GM12878 (cell line): ENCODE measurements at regions of chr3 and their contacts with region 1.

Region 1: DNA sequence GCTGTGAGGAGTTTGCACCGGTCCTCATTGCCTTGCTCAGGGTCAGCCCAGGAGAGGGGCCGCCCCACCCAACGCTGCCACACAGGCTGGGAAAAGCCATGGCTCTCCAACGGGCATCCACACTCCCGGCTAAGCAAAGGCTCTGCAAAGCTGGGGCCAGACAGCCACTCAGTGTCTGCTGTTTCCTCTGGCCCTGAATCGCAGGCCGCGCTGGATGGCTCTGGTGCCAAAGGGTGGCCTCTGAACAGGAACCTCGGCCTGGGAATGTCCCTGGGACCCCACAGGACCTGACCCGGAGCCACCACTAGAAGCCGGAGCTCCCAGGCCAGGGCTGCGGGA is 42.9 kb downstream of the RPN1 start:
- DNase-seq: no peak
- ATAC-seq: no peak
- H3K4me3 ChIP-seq: no peak overlapping the region
- H3K27ac ChIP-seq: no peak overlapping the region
- H3K4me1 ChIP-seq: no peaks in the 10 kb centered on the region
- H3K27me3 ChIP-seq: no peaks in the 10 kb centered on the region
- CTCF ChIP-seq: no peak
- EP300 ChIP-seq: no peak
- POLR2A ChIP-seq: no peak
- RAD21 ChIP-seq: no peak

Region 2: GRCh38 chr3:128426128-128426921 is 181.4 kb before region 1 on chr3:
- CTCF ChIA-PET with region 1: interaction called, 28 read pairs
- POLR2A ChIA-PET with region 1: no interaction called
- RAD21 ChIA-PET with region 1: no interaction called
- SMC1A ChIA-PET with region 1: interaction called, 3 read pairs
- in situ Hi-C with region 1: loop called (anchors 5 kb)
- intact Hi-C with region 1: loop called (anchors 1 kb)
- DNase-seq: no peak
- ATAC-seq: peak; percentile 98
- H3K4me3 ChIP-seq: no peak overlapping the region
- H3K27ac ChIP-seq: no peak overlapping the region
- H3K4me1 ChIP-seq: no peaks in the 10 kb centered on the region
- H3K27me3 ChIP-seq: no peaks in the 10 kb centered on the region; a peak in 1 of 4 replicates
- CTCF ChIP-seq: peak; percentile 74 to 88 (median 83)
- EP300 ChIP-seq: no peak
- POLR2A ChIP-seq: no peak
- RAD21 ChIP-seq: peak; percentile 93

Region 3: DNA sequence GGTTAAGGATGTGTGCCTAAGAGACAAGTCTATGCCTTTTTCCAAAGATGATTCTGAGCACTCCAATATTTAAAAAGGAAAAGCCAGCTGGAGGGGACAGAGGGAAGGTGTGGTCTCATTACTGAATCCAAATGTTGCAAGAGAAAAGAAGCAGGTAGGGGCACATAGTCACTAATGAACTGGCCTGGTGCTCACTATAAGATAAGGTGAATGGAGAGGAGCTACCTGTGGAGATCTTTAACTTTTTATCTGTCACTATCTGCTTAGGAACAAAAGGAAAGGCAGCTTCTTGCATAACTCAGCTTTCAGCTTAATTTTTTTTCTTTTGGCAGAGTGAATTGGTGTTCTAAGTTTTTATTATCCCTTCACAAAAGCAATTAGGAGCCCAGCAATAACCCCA is 26.1 kb before region 1 on chr3:
- CTCF ChIA-PET with region 1: interaction called, 10 read pairs
- POLR2A ChIA-PET with region 1: no interaction called
- RAD21 ChIA-PET with region 1: interaction called, 5 read pairs
- SMC1A ChIA-PET with region 1: no interaction called
- in situ Hi-C with region 1: no loop called
- intact Hi-C with region 1: no loop called
- DNase-seq: no peak
- ATAC-seq: no peak
- H3K4me3 ChIP-seq: no peak overlapping the region
- H3K27ac ChIP-seq: no peak overlapping the region
- H3K4me1 ChIP-seq: no peaks in the 10 kb centered on the region
- H3K27me3 ChIP-seq: no peaks in the 10 kb centered on the region
- CTCF ChIP-seq: no peak
- EP300 ChIP-seq: no peak
- POLR2A ChIP-seq: no peak
- RAD21 ChIP-seq: no peak

Region 4: GRCh38 chr3:128667641-128668040 is 60.0 kb after region 1 on chr3:
- CTCF ChIA-PET with region 1: no interaction called
- POLR2A ChIA-PET with region 1: no interaction called
- RAD21 ChIA-PET with region 1: no interaction called
- SMC1A ChIA-PET with region 1: no interaction called
- in situ Hi-C with region 1: no loop called
- intact Hi-C with region 1: no loop called
- DNase-seq: no peak
- ATAC-seq: no peak
- H3K4me3 ChIP-seq: no peak overlapping the region
- H3K27ac ChIP-seq: no peak overlapping the region
- H3K4me1 ChIP-seq: no peaks in the 10 kb centered on the region
- H3K27me3 ChIP-seq: no peaks in the 10 kb centered on the region
- CTCF ChIP-seq: no peak
- EP300 ChIP-seq: no peak
- POLR2A ChIP-seq: no peak
- RAD21 ChIP-seq: no peak

Region 5: DNA sequence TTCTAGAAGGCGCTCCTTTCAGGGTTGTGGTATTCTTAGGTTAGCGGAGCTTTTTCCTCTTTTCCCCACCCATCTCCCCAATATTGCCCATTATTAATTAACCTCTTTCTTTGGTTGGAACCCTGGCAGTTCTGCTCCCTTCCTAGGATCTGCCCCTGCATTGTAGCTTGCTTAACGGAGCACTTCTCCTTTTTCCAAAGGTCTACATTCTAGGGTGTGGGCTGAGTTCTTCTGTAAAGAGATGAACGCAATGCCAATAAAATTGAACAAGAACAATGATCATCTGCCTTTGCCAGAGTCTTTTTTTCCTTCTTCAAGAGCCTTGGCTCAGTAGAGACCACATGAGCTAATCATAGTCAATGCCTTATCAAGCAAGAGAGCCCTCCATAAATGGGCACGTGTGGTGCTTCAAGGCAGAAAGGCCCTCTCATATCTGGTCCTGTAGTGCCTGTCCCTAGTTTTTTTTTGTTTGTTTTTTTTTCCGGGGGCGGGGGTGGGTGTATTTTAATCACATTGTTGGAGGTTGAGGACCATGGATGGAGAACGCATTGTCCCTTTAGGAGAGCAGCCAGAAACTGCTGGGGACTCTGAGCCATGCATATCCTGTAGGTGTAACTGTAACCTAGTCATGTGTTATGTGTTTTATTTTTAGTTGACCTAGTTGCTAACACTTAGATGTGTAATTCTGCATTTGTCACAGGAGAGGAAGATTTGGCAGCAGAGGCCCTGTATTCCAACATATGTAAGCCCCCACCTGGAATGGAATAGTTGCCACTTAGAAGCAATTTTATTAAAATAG is 207.0 kb after region 1 on chr3:
- CTCF ChIA-PET with region 1: no interaction called
- POLR2A ChIA-PET with region 1: no interaction called
- RAD21 ChIA-PET with region 1: no interaction called
- SMC1A ChIA-PET with region 1: no interaction called
- in situ Hi-C with region 1: no loop called
- intact Hi-C with region 1: no loop called
- DNase-seq: no peak
- ATAC-seq: no peak
- H3K4me3 ChIP-seq: no peak overlapping the region
- H3K27ac ChIP-seq: no peak overlapping the region
- H3K4me1 ChIP-seq: no peaks in the 10 kb centered on the region
- H3K27me3 ChIP-seq: no peaks in the 10 kb centered on the region
- CTCF ChIP-seq: no peak
- EP300 ChIP-seq: no peak
- POLR2A ChIP-seq: no peak
- RAD21 ChIP-seq: no peak

Region 6: GRCh38 chr3:128950223-128950938 is 342.7 kb after region 1 on chr3:
- CTCF ChIA-PET with region 1: no interaction called
- POLR2A ChIA-PET with region 1: no interaction called
- RAD21 ChIA-PET with region 1: no interaction called
- SMC1A ChIA-PET with region 1: no interaction called
- in situ Hi-C with region 1: no loop called
- intact Hi-C with region 1: no loop called
- DNase-seq: no peak
- ATAC-seq: no peak; the same call in 1 of the 3 replicates
- H3K4me3 ChIP-seq: no peak overlapping the region
- H3K27ac ChIP-seq: no peak overlapping the region
- H3K4me1 ChIP-seq: no peaks in the 10 kb centered on the region
- H3K27me3 ChIP-seq: no peaks in the 10 kb centered on the region; a peak in 1 of 4 replicates
- CTCF ChIP-seq: peak in 2 of 3 experiments; percentile 10 to 37; a peak in 3 of 6 replicates
- EP300 ChIP-seq: no peak
- POLR2A ChIP-seq: no peak
- RAD21 ChIP-seq: 0 out of 2 replicates have a peak, but pooled peaks have one; percentile 12